ENCODE measurements at regions of chr7 and their contacts with region 1.

Region 1: GRCh38 chr7:130595986-130596385 is 72.6 kb downstream of the COPG2 start:
- DNase-seq: no peak
- ATAC-seq: no peak
- H3K4me3 ChIP-seq: no peak overlapping the region
- H3K27ac ChIP-seq: no peak overlapping the region
- H3K4me1 ChIP-seq: no peaks in the 10 kb centered on the region
- H3K27me3 ChIP-seq: no peaks in the 10 kb centered on the region
- CTCF ChIP-seq: no peak

Region 2: DNA sequence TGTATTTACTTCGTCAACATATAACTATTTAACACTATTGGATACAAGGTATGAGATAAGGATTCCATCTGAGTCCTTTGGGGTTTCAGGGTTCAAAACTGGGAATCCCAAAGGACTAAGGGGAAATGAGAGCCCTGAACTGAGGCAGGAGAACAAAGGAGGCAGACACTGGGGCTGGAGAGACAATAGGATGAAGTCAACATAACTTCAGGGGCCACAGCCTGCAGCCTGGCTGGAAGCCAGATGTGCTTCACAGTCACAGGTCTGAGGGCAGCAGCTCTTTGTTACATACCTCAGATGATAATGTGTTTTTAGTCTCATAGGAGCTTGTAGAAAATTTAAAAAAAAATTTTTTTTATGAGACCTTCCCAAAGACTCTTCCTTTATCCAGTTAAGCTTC is 911.2 kb before region 1 on chr7:
- CTCF ChIA-PET with region 1: no interaction called
- POLR2A ChIA-PET with region 1: interaction called, 14 read pairs
- in situ Hi-C with region 1: no loop called
- intact Hi-C with region 1: no loop called
- DNase-seq: no peak
- ATAC-seq: no peak
- H3K4me3 ChIP-seq: no peak overlapping the region
- H3K27ac ChIP-seq: no peak overlapping the region
- H3K4me1 ChIP-seq: no peaks in the 10 kb centered on the region
- H3K27me3 ChIP-seq: no peaks in the 10 kb centered on the region
- CTCF ChIP-seq: no peak

Region 3: GRCh38 chr7:130490888-130491804 is 104.8 kb before region 1 on chr7:
- CTCF ChIA-PET with region 1: no interaction called
- POLR2A ChIA-PET with region 1: no interaction called
- in situ Hi-C with region 1: no loop called
- intact Hi-C with region 1: no loop called
- DNase-seq: no peak
- ATAC-seq: peak; percentile 59
- H3K4me3 ChIP-seq: peak overlapping the region; percentile 39 to 55
- H3K27ac ChIP-seq: peak overlapping the region; percentile 75
- H3K4me1 ChIP-seq: peaks cover 21% of the 10 kb centered on the region
- H3K27me3 ChIP-seq: no peaks in the 10 kb centered on the region
- CTCF ChIP-seq: peak; percentile 83

Measured in Panc1 (cell line).